CD8-positive, alpha-beta T cell (primary cell): ENCODE measurements at regions of chr11 and their contacts with region 1.

Region 1: GRCh38 chr11:124673333-124674167 is at the starts of genes SIAE and SPA17:
- DNase-seq: peak; percentile 65 to 94 (median 84)
- ATAC-seq: peak; percentile 77
- H3K4me3 ChIP-seq: peak within 1 kb of the TSS; percentile 69 to 82
- H3K4me3 Mint-ChIP-seq: peak within 1 kb of the TSS; percentile 89
- H3K27ac ChIP-seq: peak within 1 kb of the TSS; percentile 77 to 80
- H3K27ac Mint-ChIP-seq: peak within 1 kb of the TSS; percentile 96
- H3K4me1 ChIP-seq: peaks cover 43% of the 10 kb centered on the region
- H3K4me1 Mint-ChIP-seq: peaks cover 31% of the 10 kb centered on the region
- H3K27me3 ChIP-seq: no peaks in the 10 kb centered on the region
- H3K27me3 Mint-ChIP-seq: no peaks in the 10 kb centered on the region
- CTCF ChIP-seq: no peak
- total RNA-seq, gene SIAE: 2.4 to 3.2 TPM
- total RNA-seq, gene SPA17: 0.22 to 0.68 TPM

Region 2: DNA sequence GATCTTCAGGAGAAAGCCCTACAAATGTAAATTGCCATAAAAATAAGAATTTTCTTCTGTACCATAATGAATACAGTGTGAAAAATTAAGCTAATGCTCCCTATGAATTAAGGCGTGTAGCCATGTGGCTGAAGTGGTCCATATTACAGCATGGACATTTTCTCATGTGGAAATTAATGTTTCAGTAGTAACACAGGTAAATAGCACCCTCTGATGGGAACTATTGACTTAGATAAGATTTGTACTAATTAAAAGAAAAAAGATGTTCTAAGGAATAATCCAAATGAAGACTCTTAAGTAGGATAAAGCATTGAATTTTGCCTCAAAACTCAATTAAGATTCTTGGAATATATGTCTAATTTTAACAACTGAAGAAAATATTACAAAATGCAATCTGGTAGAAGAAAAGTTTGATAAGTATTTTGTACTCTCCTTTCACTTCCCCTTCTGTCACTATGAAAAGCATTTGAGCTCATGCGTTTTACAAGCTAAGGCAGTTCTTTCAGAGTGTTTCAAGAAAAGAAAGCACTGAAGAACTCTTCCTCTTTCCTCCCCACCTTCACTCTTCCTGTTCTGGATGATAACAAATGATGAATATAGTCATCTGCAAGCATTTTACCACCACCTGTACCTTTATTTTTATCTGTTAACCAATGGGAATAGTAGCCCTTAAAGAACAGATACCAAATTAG is 343.6 kb before region 1 on chr11:
- CTCF ChIA-PET with region 1: no interaction called
- POLR2A ChIA-PET with region 1: no interaction called
- intact Hi-C with region 1: no loop called
- DNase-seq: peak in 1 of 9 experiments; percentile 1
- ATAC-seq: no peak
- H3K4me3 ChIP-seq: no peak overlapping the region
- H3K4me3 Mint-ChIP-seq: no peak overlapping the region
- H3K27ac ChIP-seq: no peak overlapping the region
- H3K27ac Mint-ChIP-seq: no peak overlapping the region
- H3K4me1 ChIP-seq: no peaks in the 10 kb centered on the region
- H3K4me1 Mint-ChIP-seq: no peaks in the 10 kb centered on the region
- H3K27me3 ChIP-seq: no peaks in the 10 kb centered on the region
- H3K27me3 Mint-ChIP-seq: peaks cover 4% of the 10 kb centered on the region
- CTCF ChIP-seq: no peak

Region 3: DNA sequence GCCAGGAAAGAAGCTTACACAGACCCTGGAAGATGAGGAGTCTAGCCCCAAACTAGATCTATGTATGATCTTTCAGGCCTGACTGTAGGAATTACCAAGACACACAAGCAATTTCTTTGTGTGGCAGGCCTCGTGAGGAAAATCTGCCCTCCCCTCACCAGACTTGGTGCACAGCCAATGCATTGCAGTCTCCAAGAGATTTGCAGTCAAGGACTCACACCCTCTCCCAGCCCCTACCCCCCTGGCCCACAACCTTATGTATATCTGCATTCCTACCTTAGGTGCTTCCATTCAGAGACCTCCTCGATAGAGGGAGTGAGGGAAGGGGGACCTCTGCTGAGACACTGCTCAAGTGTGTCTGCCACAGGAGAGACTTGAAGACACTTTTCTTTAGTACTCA is 139.9 kb before region 1 on chr11:
- CTCF ChIA-PET with region 1: no interaction called
- POLR2A ChIA-PET with region 1: no interaction called
- intact Hi-C with region 1: no loop called
- DNase-seq: no peak
- ATAC-seq: no peak
- H3K4me3 ChIP-seq: no peak overlapping the region
- H3K4me3 Mint-ChIP-seq: no peak overlapping the region
- H3K27ac ChIP-seq: no peak overlapping the region
- H3K27ac Mint-ChIP-seq: no peak overlapping the region
- H3K4me1 ChIP-seq: no peaks in the 10 kb centered on the region
- H3K4me1 Mint-ChIP-seq: no peaks in the 10 kb centered on the region
- H3K27me3 ChIP-seq: no peaks in the 10 kb centered on the region
- H3K27me3 Mint-ChIP-seq: peaks cover 36% of the 10 kb centered on the region
- CTCF ChIP-seq: no peak

Region 4: GRCh38 chr11:124622531-124623451 is 50.8 kb before region 1 on chr11 and contains the start of gene TBRG1:
- CTCF ChIA-PET with region 1: interaction called, 6 read pairs
- POLR2A ChIA-PET with region 1: no interaction called
- intact Hi-C with region 1: loop called (anchors 1 to 5 kb)
- DNase-seq: peak; percentile 62 to 95 (median 84)
- ATAC-seq: peak; percentile 97
- H3K4me3 ChIP-seq: peak within 1 kb of the TSS; percentile 94 to 100
- H3K4me3 Mint-ChIP-seq: peak within 1 kb of the TSS; percentile 97
- H3K27ac ChIP-seq: peak within 1 kb of the TSS; percentile 95 to 97
- H3K27ac Mint-ChIP-seq: peak within 1 kb of the TSS; percentile 99
- H3K4me1 ChIP-seq: peaks cover 16% of the 10 kb centered on the region
- H3K4me1 Mint-ChIP-seq: peaks cover 43% of the 10 kb centered on the region
- H3K27me3 ChIP-seq: no peaks in the 10 kb centered on the region
- H3K27me3 Mint-ChIP-seq: peaks cover 6% of the 10 kb centered on the region
- CTCF ChIP-seq: no peak
- total RNA-seq, gene TBRG1: 59.2 to 61.0 TPM

Region 5: DNA sequence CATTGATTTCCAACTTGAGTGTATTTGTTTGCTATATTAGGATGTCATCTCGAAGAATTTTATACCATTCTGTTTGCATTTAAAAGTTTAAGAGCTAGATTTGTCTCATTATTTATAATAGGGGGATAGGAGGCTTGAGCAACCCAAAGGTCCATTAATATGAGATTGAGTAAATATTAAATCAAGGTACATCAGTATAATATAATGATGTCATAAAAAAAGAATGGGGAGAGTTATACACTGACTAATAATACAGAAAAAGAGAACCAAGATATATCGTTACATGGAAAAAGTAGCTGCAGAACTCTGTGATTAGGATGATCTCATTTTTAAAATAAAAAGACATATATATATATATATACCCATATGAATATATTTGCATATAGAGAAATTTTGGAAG is 19.6 kb after region 1 on chr11:
- CTCF ChIA-PET with region 1: no interaction called
- POLR2A ChIA-PET with region 1: no interaction called
- intact Hi-C with region 1: no loop called
- DNase-seq: no peak
- ATAC-seq: no peak
- H3K4me3 ChIP-seq: no peak overlapping the region
- H3K4me3 Mint-ChIP-seq: no peak overlapping the region
- H3K27ac ChIP-seq: no peak overlapping the region
- H3K27ac Mint-ChIP-seq: no peak overlapping the region
- H3K4me1 ChIP-seq: no peaks in the 10 kb centered on the region
- H3K4me1 Mint-ChIP-seq: no peaks in the 10 kb centered on the region
- H3K27me3 ChIP-seq: no peaks in the 10 kb centered on the region
- H3K27me3 Mint-ChIP-seq: no peaks in the 10 kb centered on the region
- CTCF ChIP-seq: no peak

Region 6: DNA sequence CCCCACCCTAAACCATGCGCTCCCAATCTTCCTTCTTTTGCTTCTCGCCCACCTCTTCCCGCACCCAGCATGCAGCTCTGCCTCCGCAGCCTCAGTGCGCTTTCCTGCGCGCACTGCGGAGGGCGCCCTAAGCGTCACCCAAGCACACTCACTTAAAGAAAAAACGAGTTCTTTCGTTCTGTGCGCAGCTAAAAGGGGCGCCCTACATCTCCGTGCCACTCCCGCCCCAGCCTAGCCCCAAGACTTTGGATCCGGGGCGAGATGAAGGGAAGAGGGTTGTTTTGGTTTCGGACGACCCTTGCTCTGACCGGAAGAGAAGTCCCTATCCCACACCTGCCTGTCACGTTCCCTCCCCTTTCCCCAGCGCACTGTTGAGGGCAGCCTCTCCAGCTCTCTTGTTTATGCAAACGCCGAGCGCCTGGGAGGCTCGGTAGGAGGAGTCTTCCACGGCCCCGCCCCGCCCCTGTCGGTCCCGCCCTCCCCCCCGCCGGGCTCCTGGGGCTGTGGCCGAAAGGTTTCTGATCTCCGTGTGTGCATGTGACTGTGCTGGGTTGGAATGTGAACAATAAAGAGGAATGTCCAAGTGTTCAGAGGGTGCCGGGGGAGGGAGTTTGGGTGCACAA is 73.2 kb after region 1 on chr11:
- CTCF ChIA-PET with region 1: interaction called, 55 read pairs
- POLR2A ChIA-PET with region 1: interaction called, 28 read pairs
- intact Hi-C with region 1: loop called in 1 of 2 experiments (anchors 1 kb)
- DNase-seq: peak; percentile 64 to 90 (median 79)
- ATAC-seq: peak; percentile 92
- H3K4me3 ChIP-seq: peak overlapping the region; percentile 87 to 98
- H3K4me3 Mint-ChIP-seq: peak overlapping the region; percentile 95
- H3K27ac ChIP-seq: peak overlapping the region; percentile 58 to 80
- H3K27ac Mint-ChIP-seq: peak overlapping the region; percentile 91
- H3K4me1 ChIP-seq: peaks cover 11% of the 10 kb centered on the region
- H3K4me1 Mint-ChIP-seq: peaks cover 15% of the 10 kb centered on the region
- H3K27me3 ChIP-seq: no peaks in the 10 kb centered on the region
- H3K27me3 Mint-ChIP-seq: peaks cover 2% of the 10 kb centered on the region
- CTCF ChIP-seq: peak; percentile 55

Region 7: GRCh38 chr11:124793466-124794278 is 120.1 kb after region 1 on chr11:
- CTCF ChIA-PET with region 1: interaction called, 38 read pairs
- POLR2A ChIA-PET with region 1: no interaction called
- intact Hi-C with region 1: loop called (anchors 1 kb)
- DNase-seq: peak in 4 of 9 experiments; percentile 15 to 69 (median 39)
- ATAC-seq: peak; percentile 49
- H3K4me3 ChIP-seq: no peak overlapping the region
- H3K4me3 Mint-ChIP-seq: no peak overlapping the region
- H3K27ac ChIP-seq: no peak overlapping the region
- H3K27ac Mint-ChIP-seq: no peak overlapping the region
- H3K4me1 ChIP-seq: peaks cover 3% of the 10 kb centered on the region
- H3K4me1 Mint-ChIP-seq: peaks cover 46% of the 10 kb centered on the region
- H3K27me3 ChIP-seq: no peaks in the 10 kb centered on the region
- H3K27me3 Mint-ChIP-seq: no peaks in the 10 kb centered on the region
- CTCF ChIP-seq: peak; percentile 68

Region 8: DNA sequence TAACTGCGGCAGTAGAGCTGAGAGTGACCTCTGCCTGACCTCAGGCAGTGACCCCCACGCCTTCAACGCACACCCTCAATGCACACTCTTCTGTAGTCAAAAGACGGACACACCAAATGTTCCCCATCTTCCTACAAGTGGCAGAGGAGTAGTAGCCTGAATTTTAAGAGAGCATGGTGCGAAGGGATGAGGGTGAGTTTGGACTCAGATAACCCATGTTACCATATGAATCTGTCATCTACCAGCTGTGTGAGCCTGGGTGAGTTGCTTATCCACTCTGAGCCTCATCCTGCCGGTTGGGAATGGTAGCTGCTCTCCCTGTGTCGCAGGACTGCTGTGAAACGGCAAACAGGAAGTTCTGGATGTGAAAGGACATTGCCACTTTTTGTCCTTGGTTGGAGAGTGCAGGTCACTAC is 171.1 kb after region 1 on chr11:
- CTCF ChIA-PET with region 1: interaction called, 99 read pairs
- POLR2A ChIA-PET with region 1: no interaction called
- intact Hi-C with region 1: no loop called
- DNase-seq: no peak
- ATAC-seq: no peak
- H3K4me3 ChIP-seq: no peak overlapping the region
- H3K4me3 Mint-ChIP-seq: no peak overlapping the region
- H3K27ac ChIP-seq: no peak overlapping the region
- H3K27ac Mint-ChIP-seq: no peak overlapping the region
- H3K4me1 ChIP-seq: peaks cover 4% of the 10 kb centered on the region
- H3K4me1 Mint-ChIP-seq: peaks cover 9% of the 10 kb centered on the region
- H3K27me3 ChIP-seq: peaks cover 6 to 22% of the 10 kb centered on the region in 2 experiments
- H3K27me3 Mint-ChIP-seq: peaks cover 85% of the 10 kb centered on the region
- CTCF ChIP-seq: no peak

Region 9: DNA sequence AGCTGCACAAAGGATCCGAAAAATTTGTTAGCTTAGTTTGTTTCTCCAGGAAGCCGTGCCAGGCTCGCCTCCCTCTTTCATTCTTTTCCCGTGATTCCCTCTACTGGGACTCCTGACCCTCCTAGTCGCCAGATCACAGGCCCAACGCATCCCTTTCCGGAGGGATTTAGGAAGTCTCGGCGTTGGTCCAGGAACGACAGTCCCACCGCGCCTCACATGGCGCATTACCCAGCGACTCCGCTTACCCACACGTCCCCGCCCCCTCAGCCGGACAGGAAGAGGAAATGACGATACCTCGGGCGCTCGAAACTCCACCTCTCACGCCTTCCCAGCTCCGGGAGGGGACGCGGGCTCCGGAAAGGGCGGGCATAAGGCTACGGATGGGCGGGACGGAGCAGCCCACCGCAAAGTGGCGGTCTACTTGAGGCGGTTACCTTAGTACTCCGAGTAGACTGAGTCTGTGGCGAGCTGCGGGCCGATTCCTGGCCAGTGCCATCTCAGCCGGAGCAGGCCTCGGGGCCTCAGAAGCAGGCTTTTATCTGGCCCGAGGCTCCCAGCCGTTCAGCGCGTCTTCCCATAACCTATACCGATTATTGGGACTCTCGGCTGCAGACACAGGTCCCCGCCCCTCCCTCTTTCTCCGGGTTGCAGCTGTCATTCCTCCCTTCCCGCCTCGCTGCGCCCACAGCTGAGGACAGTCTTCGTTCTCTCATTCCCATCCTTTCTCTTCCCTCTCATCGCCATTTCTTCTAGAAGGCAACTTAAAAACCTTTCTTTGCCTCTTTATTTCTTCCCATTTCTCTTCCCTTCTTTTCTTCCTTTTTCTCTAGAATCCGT is 280.4 kb after region 1 on chr11 and contains the start of gene CCDC15:
- CTCF ChIA-PET with region 1: no interaction called
- POLR2A ChIA-PET with region 1: interaction called, 5 read pairs
- intact Hi-C with region 1: loop called (anchors 2 kb)
- DNase-seq: peak; percentile 84 to 98 (median 95)
- ATAC-seq: peak; percentile 97
- H3K4me3 ChIP-seq: peak within 1 kb of the TSS; percentile 58 to 86
- H3K4me3 Mint-ChIP-seq: no peak within 1 kb of the TSS
- H3K27ac ChIP-seq: peak within 1 kb of the TSS; percentile 76 to 93
- H3K27ac Mint-ChIP-seq: no peak within 1 kb of the TSS
- H3K4me1 ChIP-seq: peaks cover 50% of the 10 kb centered on the region
- H3K4me1 Mint-ChIP-seq: peaks cover 2% of the 10 kb centered on the region
- H3K27me3 ChIP-seq: no peaks in the 10 kb centered on the region
- H3K27me3 Mint-ChIP-seq: no peaks in the 10 kb centered on the region
- CTCF ChIP-seq: no peak
- total RNA-seq, gene CCDC15: 0.56 to 0.57 TPM